ENCODE measurements at regions of chr15 and their contacts with region 1.

Region 1: DNA sequence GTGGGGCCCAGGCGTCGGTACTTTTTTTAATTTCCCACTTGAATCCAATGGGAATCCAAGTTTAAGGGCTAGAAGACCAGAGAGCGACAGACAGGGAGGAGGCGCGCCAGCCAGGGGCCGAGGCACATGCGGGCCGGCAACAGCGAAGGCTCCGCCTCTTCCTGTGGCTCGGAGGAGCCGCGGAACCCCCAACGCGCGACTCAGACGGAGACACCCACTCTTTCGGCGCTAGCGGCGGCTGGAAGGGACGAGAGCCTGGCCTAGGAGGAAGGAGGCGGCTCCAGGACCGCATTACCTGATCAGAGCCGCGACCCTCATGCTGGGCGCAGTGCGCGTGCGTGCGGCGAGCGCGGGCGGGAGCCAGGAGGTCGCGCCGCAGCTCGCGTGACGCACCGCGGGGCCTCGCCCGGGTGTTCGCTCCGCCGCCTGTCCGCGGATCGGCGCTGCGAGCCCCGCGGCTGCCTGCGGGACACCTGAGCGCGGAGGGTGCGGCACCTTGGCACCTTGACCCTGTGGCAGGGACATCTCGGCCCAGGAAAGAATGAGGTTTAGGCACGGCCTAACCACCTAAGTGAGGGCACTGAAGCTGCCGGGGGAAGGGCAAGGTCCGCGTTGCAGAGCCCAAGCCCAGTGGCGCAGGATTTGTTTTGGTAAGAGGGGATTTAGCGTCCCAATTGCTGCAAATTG is at the start of gene DPH6:
- DNase-seq: peak; percentile 63
- H3K4me3 ChIP-seq: peak within 1 kb of the TSS; percentile 76 to 78
- H3K27ac ChIP-seq: peak within 1 kb of the TSS; percentile 95 to 96
- H3K4me1 ChIP-seq: peaks cover 8% of the 10 kb centered on the region
- H3K27me3 ChIP-seq: no peaks in the 10 kb centered on the region
- CTCF ChIP-seq: peak in 2 of 4 experiments; percentile 5 to 22
- POLR2A ChIP-seq: peak; percentile 50
- total RNA-seq, gene DPH6: 8.9 to 17.6 TPM

Region 2: GRCh38 chr15:35665896-35666536 is 120.0 kb after region 1 on chr15:
- intact Hi-C with region 1: loop called (anchors 10 kb)
- DNase-seq: no peak
- H3K4me3 ChIP-seq: no peak overlapping the region
- H3K27ac ChIP-seq: peak overlapping the region in 1 of 2 donors; percentile 31
- H3K4me1 ChIP-seq: no peaks in the 10 kb centered on the region
- H3K27me3 ChIP-seq: no peaks in the 10 kb centered on the region
- CTCF ChIP-seq: no peak
- POLR2A ChIP-seq: no peak